CD14-positive monocyte (primary cell): ENCODE measurements at regions of chr9 and their contacts with region 1.

Region 1: DNA sequence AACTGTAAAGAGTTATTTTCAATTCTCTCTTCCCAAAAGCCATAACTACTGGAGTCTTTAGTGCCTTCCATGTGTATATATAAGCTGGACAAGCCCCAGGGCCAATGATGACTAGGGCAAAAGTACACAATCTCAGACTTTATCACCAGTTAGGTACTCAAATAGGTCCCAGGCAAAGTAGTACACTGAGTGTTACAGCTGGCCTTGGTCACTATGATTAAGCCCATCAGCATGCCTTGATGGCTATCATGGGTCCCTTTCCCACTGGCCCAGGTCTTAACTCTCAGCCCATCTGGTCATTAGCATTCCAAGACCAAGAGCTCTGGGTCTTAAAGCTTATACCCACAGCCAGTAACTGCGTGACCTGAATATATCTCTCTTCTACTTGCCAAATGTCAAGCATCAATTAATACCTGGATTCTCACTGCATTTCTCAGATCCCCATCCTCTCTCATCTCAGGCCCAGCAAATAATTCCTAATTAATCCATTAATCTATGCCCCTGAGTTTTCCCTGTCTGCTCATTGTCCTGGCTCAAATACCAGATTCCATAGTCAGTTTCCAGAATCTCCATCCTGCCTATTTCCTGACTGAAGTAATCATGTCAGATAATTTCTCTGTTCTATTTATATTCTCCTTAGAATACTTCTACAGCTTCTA is 62.3 kb downstream of the NR6A1 start:
- DNase-seq: no peak
- H3K4me3 ChIP-seq: no peak overlapping the region
- H3K4me3 Mint-ChIP-seq: no peak overlapping the region
- H3K27ac ChIP-seq: no peak overlapping the region
- H3K27ac Mint-ChIP-seq: no peak overlapping the region
- H3K4me1 ChIP-seq: no peaks in the 10 kb centered on the region
- H3K4me1 Mint-ChIP-seq: peaks cover 2% of the 10 kb centered on the region
- H3K27me3 ChIP-seq: no peaks in the 10 kb centered on the region
- H3K27me3 Mint-ChIP-seq: peaks cover 0 to 2% (median 0%) of the 10 kb centered on the region in 3 donors
- CTCF ChIP-seq: no peak

Region 2: GRCh38 chr9:124617471-124618141 is 91.2 kb before region 1 on chr9:
- intact Hi-C with region 1: loop called (anchors 2 to 5 kb)
- DNase-seq: peak; percentile 48 to 61 (median 58)
- H3K4me3 ChIP-seq: no peak overlapping the region
- H3K4me3 Mint-ChIP-seq: no peak overlapping the region
- H3K27ac ChIP-seq: no peak overlapping the region
- H3K27ac Mint-ChIP-seq: no peak overlapping the region
- H3K4me1 ChIP-seq: no peaks in the 10 kb centered on the region
- H3K4me1 Mint-ChIP-seq: peaks cover 4% of the 10 kb centered on the region
- H3K27me3 ChIP-seq: no peaks in the 10 kb centered on the region
- H3K27me3 Mint-ChIP-seq: no peaks in the 10 kb centered on the region
- CTCF ChIP-seq: peak; percentile 93